Endothelial cell of umbilical vein (primary cell): ENCODE measurements at regions of chr1 and their contacts with region 1.

Region 1: DNA sequence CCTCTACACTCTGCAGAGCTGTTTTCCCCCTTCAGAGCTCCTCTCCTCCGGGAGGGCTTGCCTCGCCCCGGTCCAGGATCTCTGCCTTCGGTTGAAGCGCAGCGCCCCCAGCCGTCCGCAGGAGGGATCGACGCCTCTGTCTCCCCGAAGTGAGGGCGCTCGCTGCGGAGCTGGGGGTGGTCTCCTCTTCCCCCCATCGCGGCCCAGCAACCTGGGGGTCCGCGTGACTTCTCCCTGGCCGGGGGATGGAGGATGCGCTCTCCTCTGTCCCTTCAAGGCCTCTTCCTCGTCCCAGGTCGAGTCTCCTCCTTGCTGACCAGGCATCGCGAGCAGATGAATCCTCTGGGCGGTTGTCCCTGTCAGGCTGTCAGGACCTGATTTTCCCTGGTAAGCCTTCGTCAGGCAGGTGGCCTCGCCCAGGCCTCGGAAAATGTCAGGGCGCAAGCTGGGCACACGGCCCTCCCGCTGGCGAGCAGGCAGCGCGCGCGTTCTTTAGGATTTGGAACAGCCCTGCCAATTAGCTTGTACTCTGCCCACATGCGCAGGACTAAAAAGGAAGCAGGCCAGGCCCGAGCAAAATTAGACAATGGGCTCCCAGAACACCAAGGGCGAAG is 90.5 kb downstream of the EDEM3 start:
- DNase-seq: peak; percentile 56
- H3K4me3 ChIP-seq: peak overlapping the region in 1 of 3 experiments; percentile 6
- H3K27ac ChIP-seq: no peak overlapping the region
- H3K4me1 ChIP-seq: no peaks in the 10 kb centered on the region
- H3K27me3 ChIP-seq: peaks cover 2 to 7% of the 10 kb centered on the region in 2 experiments
- CTCF ChIP-seq: peak; percentile 89 to 97
- POLR2A ChIP-seq: no peak

Region 2: GRCh38 chr1:183635606-183636333 is 1028.4 kb before region 1 on chr1 and contains the start of gene ARPC5:
- CTCF ChIA-PET with region 1: no interaction called
- POLR2A ChIA-PET with region 1: no interaction called
- dilution Hi-C with region 1: no loop called
- intact Hi-C with region 1: loop called (anchors 10 kb)
- DNase-seq: peak; percentile 100
- H3K4me3 ChIP-seq: peak within 1 kb of the TSS; percentile 93 to 100 (median 99)
- H3K27ac ChIP-seq: peak within 1 kb of the TSS; percentile 67
- H3K4me1 ChIP-seq: peaks cover 28% of the 10 kb centered on the region
- H3K27me3 ChIP-seq: no peaks in the 10 kb centered on the region
- CTCF ChIP-seq: no peak
- POLR2A ChIP-seq: peak; percentile 95
- total RNA-seq, gene ARPC5: 185 and 190 TPM in 2 replicates

Region 3: GRCh38 chr1:184222652-184223052 is 441.5 kb before region 1 on chr1:
- CTCF ChIA-PET with region 1: interaction called, 26 read pairs
- POLR2A ChIA-PET with region 1: no interaction called
- dilution Hi-C with region 1: no loop called
- intact Hi-C with region 1: loop called (anchors 1 kb)
- DNase-seq: peak; percentile 57
- H3K4me3 ChIP-seq: no peak overlapping the region
- H3K27ac ChIP-seq: no peak overlapping the region
- H3K4me1 ChIP-seq: no peaks in the 10 kb centered on the region
- H3K27me3 ChIP-seq: peaks cover 6 to 8% of the 10 kb centered on the region in 2 experiments
- CTCF ChIP-seq: peak; percentile 87 to 90
- POLR2A ChIP-seq: no peak

Region 4: GRCh38 chr1:184379111-184379946 is 284.8 kb before region 1 on chr1:
- CTCF ChIA-PET with region 1: interaction called, 11 read pairs
- POLR2A ChIA-PET with region 1: no interaction called
- dilution Hi-C with region 1: no loop called
- intact Hi-C with region 1: no loop called
- DNase-seq: no peak
- H3K4me3 ChIP-seq: no peak overlapping the region
- H3K27ac ChIP-seq: no peak overlapping the region
- H3K4me1 ChIP-seq: no peaks in the 10 kb centered on the region
- H3K27me3 ChIP-seq: peaks cover 13% of the 10 kb centered on the region in 2 experiments
- CTCF ChIP-seq: no peak
- POLR2A ChIP-seq: no peak

Region 5: GRCh38 chr1:184563308-184563707 is 100.8 kb before region 1 on chr1:
- CTCF ChIA-PET with region 1: interaction called, 12 read pairs
- POLR2A ChIA-PET with region 1: no interaction called
- dilution Hi-C with region 1: no loop called
- intact Hi-C with region 1: loop called (anchors 5 kb)
- DNase-seq: peak; percentile 62
- H3K4me3 ChIP-seq: no peak overlapping the region
- H3K27ac ChIP-seq: no peak overlapping the region
- H3K4me1 ChIP-seq: no peaks in the 10 kb centered on the region
- H3K27me3 ChIP-seq: peaks cover 0 to 2% of the 10 kb centered on the region in 2 experiments
- CTCF ChIP-seq: peak; percentile 36
- POLR2A ChIP-seq: no peak

Region 6: DNA sequence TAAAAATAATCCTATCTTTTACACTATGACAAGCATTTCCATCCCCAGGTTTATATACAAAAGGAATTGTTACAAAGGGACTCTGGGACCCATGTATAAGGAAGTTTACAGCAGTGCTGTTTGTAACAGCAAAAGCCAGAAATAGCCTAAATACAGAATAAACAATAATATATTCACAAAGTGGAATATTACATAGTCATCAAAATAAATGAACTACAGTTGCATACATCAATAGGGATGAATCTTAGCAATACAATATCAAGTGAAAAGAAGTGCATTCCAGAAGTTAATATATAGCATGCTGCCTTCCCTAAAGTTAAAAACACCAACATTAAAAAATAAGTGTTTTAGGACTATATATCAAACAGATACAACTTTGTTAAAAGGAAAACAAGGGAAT is 13.2 kb after region 1 on chr1:
- CTCF ChIA-PET with region 1: interaction called, 17 read pairs
- POLR2A ChIA-PET with region 1: no interaction called
- dilution Hi-C with region 1: no loop called
- intact Hi-C with region 1: no loop called
- DNase-seq: no peak
- H3K4me3 ChIP-seq: no peak overlapping the region
- H3K27ac ChIP-seq: no peak overlapping the region
- H3K4me1 ChIP-seq: no peaks in the 10 kb centered on the region
- H3K27me3 ChIP-seq: peaks cover 0 to 2% of the 10 kb centered on the region in 2 experiments
- CTCF ChIP-seq: no peak
- POLR2A ChIP-seq: no peak

Region 7: GRCh38 chr1:184691719-184692324 is 27.7 kb after region 1 on chr1:
- CTCF ChIA-PET with region 1: interaction called, 20 read pairs
- POLR2A ChIA-PET with region 1: no interaction called
- dilution Hi-C with region 1: no loop called
- intact Hi-C with region 1: no loop called
- DNase-seq: peak; percentile 67
- H3K4me3 ChIP-seq: no peak overlapping the region
- H3K27ac ChIP-seq: no peak overlapping the region
- H3K4me1 ChIP-seq: no peaks in the 10 kb centered on the region
- H3K27me3 ChIP-seq: no peaks in the 10 kb centered on the region
- CTCF ChIP-seq: peak; percentile 52 to 61
- POLR2A ChIP-seq: no peak